A673 (cell line): ENCODE measurements at regions of chr7 and their contacts with region 1.

Region 1: GRCh38 chr7:99631295-99632109 is 14.8 kb downstream of the ZSCAN25 start:
- DNase-seq: peak; percentile 27
- H3K4me3 ChIP-seq: no peak overlapping the region
- H3K27ac ChIP-seq: no peak overlapping the region
- H3K4me1 ChIP-seq: no peaks in the 10 kb centered on the region
- H3K27me3 ChIP-seq: no peaks in the 10 kb centered on the region
- CTCF ChIP-seq: peak; percentile 34

Region 2: DNA sequence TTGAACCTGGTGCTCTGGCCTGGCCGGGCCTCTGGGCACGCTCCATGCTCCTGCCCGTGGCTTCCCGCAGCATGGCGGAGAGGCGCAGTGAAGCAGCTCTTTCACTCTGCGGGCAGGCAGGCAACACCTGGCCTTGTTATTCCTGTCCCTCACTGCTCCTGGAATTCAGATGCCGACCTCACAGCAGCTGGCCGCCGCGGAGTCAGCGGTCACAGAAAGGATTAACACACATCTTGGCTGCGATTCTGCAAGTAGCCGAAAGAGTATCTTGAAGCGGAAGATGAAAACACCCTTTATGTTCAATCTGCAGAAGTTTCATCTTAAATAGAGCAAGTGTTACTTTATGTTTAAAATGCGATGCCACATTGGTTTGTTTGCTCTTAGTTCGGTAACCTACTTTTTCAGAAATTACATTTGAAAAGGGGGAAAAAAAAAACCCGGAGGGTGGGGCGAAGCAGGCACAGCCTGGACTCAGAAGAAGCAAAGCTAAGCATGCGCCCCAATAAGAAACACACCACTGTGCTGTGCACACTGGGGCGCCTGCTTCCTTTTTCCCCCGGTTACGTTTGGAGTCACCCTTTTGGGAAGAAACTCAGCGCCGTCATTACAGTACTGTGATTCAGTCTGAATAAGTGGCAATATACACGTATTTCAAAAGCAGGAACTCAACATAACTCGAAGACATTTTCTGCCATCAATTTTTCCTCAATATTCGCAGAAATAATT is 1307.7 kb before region 1 on chr7:
- CTCF ChIA-PET with region 1: no interaction called
- POLR2A ChIA-PET with region 1: no interaction called
- intact Hi-C with region 1: no loop called
- DNase-seq: no peak
- H3K4me3 ChIP-seq: no peak overlapping the region
- H3K27ac ChIP-seq: no peak overlapping the region
- H3K4me1 ChIP-seq: no peaks in the 10 kb centered on the region
- H3K27me3 ChIP-seq: peaks cover 18% of the 10 kb centered on the region
- CTCF ChIP-seq: no peak

Region 3: GRCh38 chr7:99072126-99072525 is 559.4 kb before region 1 on chr7:
- CTCF ChIA-PET with region 1: no interaction called
- POLR2A ChIA-PET with region 1: no interaction called
- intact Hi-C with region 1: no loop called
- DNase-seq: no peak
- H3K4me3 ChIP-seq: no peak overlapping the region
- H3K27ac ChIP-seq: no peak overlapping the region
- H3K4me1 ChIP-seq: no peaks in the 10 kb centered on the region
- H3K27me3 ChIP-seq: no peaks in the 10 kb centered on the region
- CTCF ChIP-seq: no peak

Region 4: DNA sequence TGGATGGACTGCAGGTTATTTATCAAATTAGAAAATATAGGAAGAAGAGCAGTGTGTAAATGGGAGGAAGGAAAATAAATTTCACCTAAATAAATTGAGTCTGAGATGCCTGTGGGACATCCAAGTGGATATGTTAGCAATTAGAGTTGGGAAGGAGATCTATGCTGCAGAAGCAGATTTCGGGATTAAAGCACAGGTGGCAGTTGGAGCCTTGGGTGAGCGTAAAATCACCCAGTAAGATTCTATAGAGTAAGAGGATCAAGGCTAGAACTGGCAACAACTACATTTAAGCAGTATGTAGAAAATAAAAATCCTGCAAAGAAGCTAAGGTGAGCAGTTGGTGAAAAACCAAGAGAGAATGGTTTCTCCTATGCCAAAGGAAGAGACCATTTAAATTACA is 279.5 kb after region 1 on chr7:
- CTCF ChIA-PET with region 1: interaction called, 14 read pairs
- POLR2A ChIA-PET with region 1: no interaction called
- intact Hi-C with region 1: no loop called
- DNase-seq: no peak
- H3K4me3 ChIP-seq: no peak overlapping the region
- H3K27ac ChIP-seq: no peak overlapping the region
- H3K4me1 ChIP-seq: no peaks in the 10 kb centered on the region
- H3K27me3 ChIP-seq: no peaks in the 10 kb centered on the region
- CTCF ChIP-seq: no peak